ENCODE measurements at regions of chr16 and their contacts with region 1.

Region 1: GRCh38 chr16:17744903-17745575 is 274.3 kb upstream of the XYLT1 start:
- DNase-seq: peak; percentile 31 to 65
- H3K4me3 ChIP-seq: peak overlapping the region in 2 of 4 experiments; percentile 10 to 44; a peak in 4 of 8 replicates
- H3K27ac ChIP-seq: peak overlapping the region; percentile 87
- H3K4me1 ChIP-seq: peaks cover 4 to 27% (median 15%) of the 10 kb centered on the region in 4 experiments
- H3K27me3 ChIP-seq: no peaks in the 10 kb centered on the region
- CTCF ChIP-seq: no peak
- EP300 ChIP-seq: peak in 1 of 2 experiments; percentile 27; a peak in 1 of 3 replicates
- POLR2A ChIP-seq: 0 out of 3 replicates have a peak, but pooled peaks of 1 of the 2 experiments have one; percentile 24
- RAD21 ChIP-seq: no peak

Region 2: GRCh38 chr16:17757808-17758207 is 12.8 kb after region 1 on chr16:
- CTCF ChIA-PET with region 1: interaction called, 3 read pairs
- POLR2A ChIA-PET with region 1: interaction called, 14 read pairs
- DNase-seq: no peak
- H3K4me3 ChIP-seq: no peak overlapping the region
- H3K27ac ChIP-seq: peak overlapping the region; percentile 7; the same call in 1 of the 2 replicates
- H3K4me1 ChIP-seq: peaks cover 0 to 13% (median 8%) of the 10 kb centered on the region in 4 experiments; a peak in 5 of 7 replicates
- H3K27me3 ChIP-seq: no peaks in the 10 kb centered on the region
- CTCF ChIP-seq: no peak
- EP300 ChIP-seq: no peak
- POLR2A ChIP-seq: no peak
- RAD21 ChIP-seq: no peak

Measured in H1 (cell line).